ENCODE measurements at regions of chrX and their contacts with region 1.

Region 1: GRCh38 chrX:120365320-120365719 is 3.4 kb downstream of the ATP1B4 start:
- DNase-seq: peak; percentile 68 to 92
- ATAC-seq: peak; percentile 64 to 82
- H3K4me3 ChIP-seq: peak overlapping the region in 1 of 4 donors; percentile 8
- H3K27ac ChIP-seq: peak overlapping the region; percentile 81 to 90 (median 88)
- H3K4me1 ChIP-seq: peaks cover 24 to 32% of the 10 kb centered on the region in 2 donors
- H3K27me3 ChIP-seq: no peaks in the 10 kb centered on the region
- CTCF ChIP-seq: peak; percentile 52 to 76 (median 62)
- POLR2A ChIP-seq: no peak

Region 2: GRCh38 chrX:120269373-120270035 is 95.8 kb before region 1 on chrX:
- in situ Hi-C with region 1: no loop called
- intact Hi-C with region 1: no loop called
- DNase-seq: no peak
- ATAC-seq: no peak
- H3K4me3 ChIP-seq: no peak overlapping the region
- H3K27ac ChIP-seq: no peak overlapping the region
- H3K4me1 ChIP-seq: no peaks in the 10 kb centered on the region
- H3K27me3 ChIP-seq: no peaks in the 10 kb centered on the region
- CTCF ChIP-seq: no peak
- POLR2A ChIP-seq: no peak

Region 3: GRCh38 chrX:120446498-120446897 is 81.2 kb after region 1 on chrX:
- in situ Hi-C with region 1: loop called in 2 of 4 experiments (anchors 10 to 25 kb)
- intact Hi-C with region 1: loop called (anchors 5 kb)
- DNase-seq: peak in 1 of 2 donors; percentile 15
- ATAC-seq: peak; percentile 91 to 93
- H3K4me3 ChIP-seq: no peak overlapping the region
- H3K27ac ChIP-seq: peak overlapping the region; percentile 59 to 75 (median 66)
- H3K4me1 ChIP-seq: peaks cover 14 to 17% of the 10 kb centered on the region in 2 donors
- H3K27me3 ChIP-seq: no peaks in the 10 kb centered on the region
- CTCF ChIP-seq: no peak
- POLR2A ChIP-seq: no peak

Region 4: GRCh38 chrX:120457766-120458180 is 92.5 kb after region 1 on chrX:
- in situ Hi-C with region 1: loop called in 2 of 4 experiments (anchors 10 to 25 kb)
- intact Hi-C with region 1: loop called (anchors 2 kb)
- DNase-seq: no peak
- ATAC-seq: peak; percentile 82
- H3K4me3 ChIP-seq: no peak overlapping the region
- H3K27ac ChIP-seq: peak overlapping the region; percentile 47 to 97 (median 95)
- H3K4me1 ChIP-seq: peaks cover 39 to 47% of the 10 kb centered on the region in 2 donors
- H3K27me3 ChIP-seq: no peaks in the 10 kb centered on the region
- CTCF ChIP-seq: no peak
- POLR2A ChIP-seq: no peak

Region 5: GRCh38 chrX:120468825-120469525 is 103.7 kb after region 1 on chrX and contains the start of gene LAMP2:
- in situ Hi-C with region 1: loop called in 1 of 4 experiments (anchors 25 kb)
- intact Hi-C with region 1: no loop called
- DNase-seq: peak; percentile 89 to 93
- ATAC-seq: peak; percentile 95 to 99
- H3K4me3 ChIP-seq: peak within 1 kb of the TSS; percentile 63 to 82 (median 76)
- H3K27ac ChIP-seq: peak within 1 kb of the TSS; percentile 95 to 97 (median 95)
- H3K4me1 ChIP-seq: peaks cover 9 to 25% of the 10 kb centered on the region in 2 donors
- H3K27me3 ChIP-seq: no peaks in the 10 kb centered on the region
- CTCF ChIP-seq: no peak
- POLR2A ChIP-seq: peak; percentile 86 to 91
- total RNA-seq, gene LAMP2: 70.0 to 112 (median 110) TPM

Measured in gastrocnemius medialis (tissue), 4 donors.